Head of caudate nucleus (tissue), 42 donors: ENCODE measurements at regions of chr1 and their contacts with region 1.

Region 1: DNA sequence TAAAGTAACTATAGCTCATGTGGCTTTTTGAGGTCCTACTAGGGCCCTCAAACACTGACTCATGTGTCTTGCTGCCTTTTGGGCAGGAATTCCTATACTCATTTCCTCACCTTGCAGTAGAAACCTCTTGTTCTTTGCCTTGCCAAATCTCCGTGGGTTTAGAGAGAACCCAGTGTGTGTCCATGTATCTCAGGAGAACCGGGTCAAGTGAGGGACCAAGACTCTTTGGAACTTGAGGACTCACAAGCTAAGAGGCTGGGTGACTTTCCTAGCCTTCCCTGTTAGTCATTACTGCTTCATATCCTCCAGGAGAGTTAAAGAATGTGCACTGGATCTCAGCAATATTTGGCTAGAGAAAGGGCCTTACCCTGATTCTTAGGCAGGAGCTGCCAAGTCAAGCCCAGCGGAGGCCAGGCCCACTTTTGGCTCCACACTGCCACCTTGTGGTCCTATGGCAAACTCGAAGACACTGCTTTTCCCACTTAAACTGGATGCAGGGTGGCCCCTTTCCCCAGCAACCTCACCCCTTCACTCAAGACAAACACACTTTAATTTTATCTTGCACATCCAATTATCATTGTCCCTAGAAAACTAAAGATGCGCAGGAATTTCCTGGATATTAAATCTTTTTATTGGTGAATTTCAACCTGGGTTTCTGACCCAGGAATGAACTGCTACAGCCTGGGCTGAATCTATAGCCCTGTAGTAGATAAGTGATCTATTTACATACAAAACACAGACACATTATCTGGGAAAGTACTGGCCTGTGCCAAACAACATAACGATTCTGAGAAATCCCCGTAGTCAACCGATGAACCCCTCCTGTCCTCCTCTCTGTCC is 10.6 kb downstream of the AVPR1B start:
- DNase-seq: peak; percentile 27 to 94 (median 87)

Region 2: DNA sequence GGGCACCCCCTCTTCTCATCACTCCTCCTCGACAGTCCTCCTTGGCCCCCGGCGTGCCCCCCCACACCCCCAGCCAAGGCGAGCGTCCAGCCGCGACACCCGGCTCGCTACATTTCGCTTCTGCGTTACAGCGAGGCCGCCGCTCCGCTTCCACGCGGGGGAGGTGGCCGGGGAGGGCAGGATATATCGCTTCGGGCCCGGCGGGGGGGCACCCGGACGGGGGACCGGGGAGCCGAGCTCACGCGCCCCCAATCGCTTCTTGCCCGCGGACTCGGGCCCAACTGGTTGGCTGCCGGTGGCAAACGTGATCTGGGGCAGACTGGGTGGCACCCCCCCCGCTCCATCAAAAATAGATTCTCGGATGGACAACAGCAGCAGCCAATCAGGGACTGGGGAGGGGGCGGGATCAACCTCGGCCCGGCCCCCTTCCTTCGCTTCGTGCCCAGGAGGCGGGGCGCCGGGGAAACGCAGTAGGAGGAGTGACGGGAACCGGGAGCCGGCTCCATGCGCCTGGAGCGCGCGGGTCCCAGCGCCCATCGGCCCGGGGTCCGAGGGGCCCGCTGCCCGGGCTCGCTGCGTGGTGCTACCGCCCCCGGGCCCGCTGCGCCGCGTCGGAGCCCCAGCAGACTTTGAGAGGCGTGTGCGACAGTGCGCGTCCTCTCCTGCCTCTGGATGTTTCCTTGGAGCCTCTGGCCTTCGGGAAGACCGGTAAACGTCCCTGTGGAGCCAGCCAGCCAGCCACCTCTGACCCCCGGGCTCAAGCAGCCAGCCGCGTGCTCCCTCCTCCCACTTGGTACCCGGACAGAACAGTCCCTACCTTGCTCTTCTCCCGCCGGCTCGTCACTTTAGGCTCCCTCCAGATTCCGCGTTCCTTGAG is 293.4 kb before region 1 on chr1 and contains the start of gene SLC41A1:
- intact Hi-C with region 1: loop called (anchors 10 kb)
- DNase-seq: peak; percentile 94 to 99 (median 97)

Region 3: DNA sequence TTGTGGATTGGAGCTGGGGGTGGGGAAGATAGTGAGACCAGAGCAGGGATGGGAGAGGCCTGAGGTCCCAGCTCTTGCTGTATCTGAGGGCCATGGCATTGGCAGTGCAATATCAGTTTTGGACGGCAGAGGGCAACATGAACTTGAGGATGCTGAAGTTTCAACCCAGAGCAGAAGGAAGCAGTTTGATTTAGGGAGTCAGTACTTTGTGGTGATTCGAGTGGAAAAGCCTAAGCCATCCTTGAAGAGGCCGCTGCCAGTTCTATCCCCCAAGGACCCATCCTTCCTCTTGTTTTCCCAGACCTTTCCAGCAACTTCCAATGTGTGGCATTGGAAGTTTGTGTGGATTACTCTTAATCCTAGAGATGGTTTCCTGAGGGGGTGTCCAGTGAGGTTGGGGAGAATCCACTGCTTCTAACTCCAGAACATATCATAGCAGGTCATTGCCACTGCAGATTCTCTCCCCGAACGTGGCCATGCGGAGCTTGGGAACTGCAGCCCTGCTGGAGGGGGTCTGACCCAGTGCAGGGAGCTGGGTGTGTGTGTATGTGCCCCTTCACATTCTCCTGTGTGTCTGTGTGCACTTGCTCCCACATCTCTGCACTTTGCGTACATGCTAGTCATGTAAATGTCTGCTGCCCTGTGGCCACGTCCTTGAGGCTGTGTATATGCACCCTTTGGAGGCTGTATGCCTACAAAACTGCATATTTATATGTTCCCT is 187.4 kb before region 1 on chr1:
- intact Hi-C with region 1: loop called (anchors 5 kb)
- DNase-seq: peak; percentile 46 to 97 (median 90)

Region 4: GRCh38 chr1:205983925-205984725 is 122.4 kb before region 1 on chr1:
- intact Hi-C with region 1: loop called (anchors 2 kb)
- DNase-seq: peak; percentile 55 to 92 (median 81)

Region 5: GRCh38 chr1:206030714-206031113 is 75.8 kb before region 1 on chr1:
- intact Hi-C with region 1: loop called (anchors 10 kb)
- DNase-seq: peak; percentile 57 to 89 (median 76)